ENCODE measurements at regions of chr19 and their contacts with region 1.

Region 1: DNA sequence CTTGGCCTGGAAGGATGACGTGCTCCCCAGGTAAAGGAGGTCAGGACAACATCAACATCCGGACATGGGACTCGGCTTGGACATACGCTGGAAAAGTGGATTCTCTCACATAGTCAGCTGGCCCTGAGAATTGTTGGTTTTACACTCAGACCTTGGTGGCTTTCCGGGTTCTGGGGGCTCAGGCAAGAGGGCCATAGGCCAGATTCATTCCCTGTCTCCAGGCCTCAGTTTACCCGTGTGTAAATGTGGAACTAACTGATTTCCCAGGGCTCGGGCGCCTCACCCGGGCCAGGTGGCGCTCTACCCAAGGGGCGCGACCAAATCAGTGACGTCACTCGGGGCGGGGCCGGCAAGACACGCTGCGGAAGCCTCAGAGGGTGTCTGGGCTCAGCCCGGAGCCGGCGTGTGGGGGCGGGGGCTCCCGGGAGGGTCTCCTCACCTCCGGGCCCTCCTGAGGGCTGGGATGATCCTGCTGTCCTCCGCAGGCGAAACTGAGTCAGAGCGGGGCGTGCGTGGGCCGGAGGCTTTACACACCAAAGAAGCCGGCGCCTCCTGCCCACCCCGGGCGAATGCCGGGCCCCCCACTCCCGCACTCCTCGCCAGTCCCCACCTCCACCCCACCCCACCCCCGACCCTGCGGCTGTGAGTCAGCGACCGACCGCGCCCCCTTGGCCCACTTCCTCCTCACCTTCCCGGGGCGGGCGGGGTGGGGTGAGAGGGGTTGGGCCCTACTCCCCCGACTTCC is 861 bp upstream of the VASP start:
- DNase-seq: peak; percentile 64
- ATAC-seq: peak; percentile 74
- H3K4me3 ChIP-seq: peak overlapping the region; percentile 99
- H3K27ac ChIP-seq: peak overlapping the region; percentile 98
- H3K4me1 ChIP-seq: peaks cover 21% of the 10 kb centered on the region
- H3K27me3 ChIP-seq: no peaks in the 10 kb centered on the region
- CTCF ChIP-seq: peak; percentile 56 to 79 (median 70)
- EP300 ChIP-seq: peak in 1 of 2 experiments; percentile 35; a peak in 1 of 4 replicates
- POLR2A ChIP-seq: peak; percentile 87
- RAD21 ChIP-seq: peak; percentile 46; the same call in 1 of the 2 replicates

Region 2: DNA sequence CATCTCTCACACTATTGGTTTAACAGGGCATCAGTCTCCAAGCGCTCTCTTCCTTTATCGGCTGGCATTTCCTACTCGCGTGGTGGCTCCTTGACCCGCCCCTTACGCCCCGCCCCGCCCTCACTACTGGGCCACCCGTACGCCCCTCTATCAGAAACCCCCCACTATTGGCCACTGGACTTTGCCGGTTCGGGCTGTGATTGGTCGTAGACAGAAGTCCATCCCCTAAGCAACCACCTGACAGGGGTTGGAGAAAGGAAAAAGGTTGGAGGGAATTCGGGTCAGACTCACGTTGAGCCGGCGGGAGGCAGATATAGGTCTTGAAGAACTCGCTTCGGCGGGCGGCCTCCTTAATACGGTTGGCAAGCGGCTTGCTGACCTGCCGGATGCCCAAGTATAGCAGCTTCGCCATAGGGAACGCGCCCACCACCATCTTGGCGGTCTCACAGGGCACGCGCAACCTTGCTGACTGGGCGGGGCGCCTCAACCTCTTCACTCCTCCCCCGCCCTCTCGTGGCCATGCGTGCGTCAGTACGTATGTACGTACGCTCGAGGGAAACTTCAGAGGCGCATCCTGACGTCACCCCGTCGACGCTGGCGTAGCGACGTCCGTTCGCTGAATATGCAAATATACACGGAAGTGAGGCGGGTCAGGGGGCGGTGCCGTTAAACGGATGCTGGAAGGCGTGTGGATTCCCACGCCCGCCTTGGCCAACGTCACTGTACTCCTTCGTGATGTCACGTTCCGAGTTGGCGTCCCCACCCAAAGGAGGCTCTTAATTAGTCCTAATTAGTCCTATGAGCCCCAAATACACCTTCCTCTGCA is 78.1 kb after region 1 on chr19 and contains the start of gene OPA3:
- CTCF ChIA-PET with region 1: interaction called, 3 read pairs
- POLR2A ChIA-PET with region 1: interaction called, 10 read pairs
- RAD21 ChIA-PET with region 1: interaction called, 3 read pairs
- SMC1A ChIA-PET with region 1: no interaction called
- in situ Hi-C with region 1: no loop called
- intact Hi-C with region 1: no loop called
- DNase-seq: peak; percentile 100
- ATAC-seq: peak; percentile 96
- H3K4me3 ChIP-seq: peak within 1 kb of the TSS; percentile 99
- H3K27ac ChIP-seq: peak within 1 kb of the TSS; percentile 85
- H3K4me1 ChIP-seq: peaks cover 6% of the 10 kb centered on the region; the same call in 1 of the 2 replicates
- H3K27me3 ChIP-seq: no peaks in the 10 kb centered on the region
- CTCF ChIP-seq: no peak
- EP300 ChIP-seq: peak in 1 of 2 experiments; percentile 58; a peak in 1 of 4 replicates
- POLR2A ChIP-seq: peak; percentile 93
- RAD21 ChIP-seq: no peak
- polyA plus RNA-seq, gene OPA3: 2.2 to 2.3 TPM

Measured in GM12878 (cell line).